CD4-positive, alpha-beta memory T cell (primary cell): ENCODE measurements at regions of chr1 and their contacts with region 1.

Region 1: DNA sequence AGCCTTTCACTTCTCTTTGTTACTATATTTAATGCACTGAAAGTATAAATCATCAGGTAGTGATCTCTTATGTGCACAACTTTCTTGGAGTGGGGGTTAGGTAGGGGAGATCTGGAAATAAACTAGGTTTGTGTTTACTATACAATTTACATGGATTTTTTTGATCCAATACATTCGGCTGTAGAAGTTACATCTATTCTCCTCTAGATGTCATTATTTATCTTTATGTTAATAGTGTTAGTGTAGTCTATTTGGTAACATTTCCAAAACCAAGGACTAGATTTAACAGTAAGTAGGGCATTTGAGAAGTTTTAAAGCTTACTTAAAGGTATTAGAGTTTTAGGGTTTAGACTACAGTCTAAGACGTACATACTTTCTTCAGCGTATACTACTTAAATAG is 5.4 kb downstream of the VPS45 start:
- DNase-seq: peak in 4 of 5 donors; percentile 45 to 59 (median 50)
- H3K4me3 ChIP-seq: no peak overlapping the region
- H3K4me3 Mint-ChIP-seq: no peak overlapping the region
- H3K27ac ChIP-seq: no peak overlapping the region
- H3K27ac Mint-ChIP-seq: peak overlapping the region in 4 of 7 donors; percentile 1 to 76 (median 66)
- H3K4me1 ChIP-seq: peaks cover 29% of the 10 kb centered on the region
- H3K4me1 Mint-ChIP-seq: peaks cover 35 to 47% (median 40%) of the 10 kb centered on the region in 4 donors
- H3K27me3 ChIP-seq: no peaks in the 10 kb centered on the region
- H3K27me3 Mint-ChIP-seq: no peaks in the 10 kb centered on the region

Region 2: DNA sequence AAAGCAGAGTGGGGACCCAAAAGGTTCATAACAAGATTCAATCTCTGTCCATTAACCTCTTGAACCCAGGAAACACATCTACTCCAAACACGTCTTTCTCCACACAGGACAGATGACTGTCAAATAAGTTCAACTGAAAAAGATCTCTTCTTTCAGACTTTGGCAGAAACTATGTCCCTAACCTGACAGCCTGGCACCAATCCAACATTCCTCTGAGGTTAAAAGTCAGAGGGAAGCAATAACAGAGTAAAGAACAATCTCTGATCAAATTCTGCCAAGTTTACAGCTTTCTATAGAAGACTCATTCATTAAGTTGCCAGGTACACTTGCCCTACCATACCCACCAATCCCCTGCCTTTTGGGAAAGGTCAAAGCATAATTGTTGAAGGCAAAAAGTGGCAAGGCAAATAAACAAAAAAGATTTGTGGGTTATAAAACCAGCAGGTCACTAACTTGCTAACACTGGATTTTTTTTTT is 94.4 kb before region 1 on chr1:
- CTCF ChIA-PET with region 1: no interaction called
- POLR2A ChIA-PET with region 1: no interaction called
- intact Hi-C with region 1: no loop called
- DNase-seq: no peak
- H3K4me3 ChIP-seq: no peak overlapping the region
- H3K4me3 Mint-ChIP-seq: no peak overlapping the region
- H3K27ac ChIP-seq: no peak overlapping the region
- H3K27ac Mint-ChIP-seq: peak overlapping the region in 2 of 7 donors; percentile 41 to 60
- H3K4me1 ChIP-seq: no peaks in the 10 kb centered on the region
- H3K4me1 Mint-ChIP-seq: peaks cover 6 to 13% (median 8%) of the 10 kb centered on the region in 4 donors
- H3K27me3 ChIP-seq: no peaks in the 10 kb centered on the region
- H3K27me3 Mint-ChIP-seq: no peaks in the 10 kb centered on the region

Region 3: GRCh38 chr1:150051089-150051373 is 21.9 kb before region 1 on chr1:
- CTCF ChIA-PET with region 1: no interaction called
- POLR2A ChIA-PET with region 1: no interaction called
- intact Hi-C with region 1: no loop called
- DNase-seq: no peak
- H3K4me3 ChIP-seq: no peak overlapping the region
- H3K4me3 Mint-ChIP-seq: no peak overlapping the region
- H3K27ac ChIP-seq: no peak overlapping the region
- H3K27ac Mint-ChIP-seq: no peak overlapping the region
- H3K4me1 ChIP-seq: no peaks in the 10 kb centered on the region
- H3K4me1 Mint-ChIP-seq: peaks cover 0 to 3% (median 1%) of the 10 kb centered on the region in 4 donors
- H3K27me3 ChIP-seq: no peaks in the 10 kb centered on the region
- H3K27me3 Mint-ChIP-seq: peaks cover 0 to 1% of the 10 kb centered on the region in 2 donors

Region 4: DNA sequence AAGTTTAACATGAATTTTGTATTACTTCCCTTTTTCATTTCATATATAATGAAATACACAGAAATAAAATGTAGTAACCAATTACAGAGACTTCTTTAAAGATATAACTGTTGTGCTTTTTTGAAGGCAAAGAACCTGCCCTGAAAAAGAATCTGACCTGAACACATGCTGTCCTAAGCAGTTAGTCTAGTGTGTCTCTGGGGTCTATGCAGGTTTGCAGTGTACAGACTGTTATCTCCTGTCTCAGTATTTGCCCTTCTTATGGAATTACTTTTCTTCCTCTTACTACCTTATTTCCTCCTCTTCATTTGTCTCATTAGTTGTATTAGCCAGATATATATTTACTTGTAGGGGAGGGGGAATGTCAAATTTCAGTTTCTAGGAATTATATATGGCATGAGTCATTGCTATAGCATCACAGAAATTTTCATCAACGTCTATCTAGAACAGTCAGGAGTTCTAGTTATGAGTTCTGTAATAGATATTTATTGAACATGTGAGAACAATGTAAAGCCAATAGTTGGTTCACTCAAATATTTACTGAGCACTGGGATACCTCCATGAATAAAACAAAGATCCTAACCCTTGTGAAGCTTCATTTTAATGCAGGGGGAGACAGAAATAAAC is 48.4 kb after region 1 on chr1:
- CTCF ChIA-PET with region 1: interaction called, 14 read pairs
- POLR2A ChIA-PET with region 1: interaction called, 3 read pairs
- intact Hi-C with region 1: no loop called
- DNase-seq: no peak
- H3K4me3 ChIP-seq: no peak overlapping the region
- H3K4me3 Mint-ChIP-seq: no peak overlapping the region
- H3K27ac ChIP-seq: no peak overlapping the region
- H3K27ac Mint-ChIP-seq: peak overlapping the region in 6 of 7 donors; percentile 1 to 65 (median 47)
- H3K4me1 ChIP-seq: peaks cover 12% of the 10 kb centered on the region
- H3K4me1 Mint-ChIP-seq: peaks cover 21 to 39% (median 29%) of the 10 kb centered on the region in 4 donors
- H3K27me3 ChIP-seq: no peaks in the 10 kb centered on the region
- H3K27me3 Mint-ChIP-seq: no peaks in the 10 kb centered on the region

Region 5: DNA sequence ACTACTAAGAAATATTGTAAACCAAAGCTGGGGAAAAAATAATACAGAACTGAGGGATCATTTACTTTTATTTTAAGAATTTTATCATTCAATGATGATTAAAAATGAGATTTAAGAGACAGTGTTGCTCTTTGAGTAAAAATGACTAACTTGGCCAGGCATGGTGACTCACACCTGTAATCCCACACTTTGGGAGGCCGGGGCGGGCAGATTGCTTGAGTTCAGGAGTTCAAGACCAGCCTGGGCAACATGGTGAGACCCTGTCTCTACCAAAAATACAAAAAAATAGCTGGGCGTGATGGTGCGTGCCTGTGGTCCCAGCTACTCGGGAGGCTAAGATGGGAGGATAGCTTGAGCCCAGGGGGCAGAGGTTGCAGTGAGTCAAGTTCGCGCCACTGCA is 54.9 kb after region 1 on chr1:
- CTCF ChIA-PET with region 1: interaction called, 14 read pairs
- POLR2A ChIA-PET with region 1: interaction called, 3 read pairs
- intact Hi-C with region 1: no loop called
- DNase-seq: no peak
- H3K4me3 ChIP-seq: no peak overlapping the region
- H3K4me3 Mint-ChIP-seq: no peak overlapping the region
- H3K27ac ChIP-seq: no peak overlapping the region
- H3K27ac Mint-ChIP-seq: peak overlapping the region in 2 of 7 donors; percentile 47 to 64
- H3K4me1 ChIP-seq: peaks cover 7% of the 10 kb centered on the region
- H3K4me1 Mint-ChIP-seq: peaks cover 11 to 17% (median 14%) of the 10 kb centered on the region in 4 donors
- H3K27me3 ChIP-seq: no peaks in the 10 kb centered on the region
- H3K27me3 Mint-ChIP-seq: no peaks in the 10 kb centered on the region

Region 6: GRCh38 chr1:150162862-150163706 is 90.1 kb after region 1 on chr1:
- CTCF ChIA-PET with region 1: interaction called, 574 read pairs
- POLR2A ChIA-PET with region 1: interaction called, 130 read pairs
- intact Hi-C with region 1: loop called (anchors 1 kb)
- DNase-seq: no peak
- H3K4me3 ChIP-seq: no peak overlapping the region
- H3K4me3 Mint-ChIP-seq: peak overlapping the region in 5 of 8 donors; percentile 0 to 61 (median 34)
- H3K27ac ChIP-seq: no peak overlapping the region
- H3K27ac Mint-ChIP-seq: peak overlapping the region in 5 of 7 donors; percentile 34 to 83 (median 53)
- H3K4me1 ChIP-seq: peaks cover 40% of the 10 kb centered on the region
- H3K4me1 Mint-ChIP-seq: peaks cover 34 to 52% (median 42%) of the 10 kb centered on the region in 4 donors
- H3K27me3 ChIP-seq: no peaks in the 10 kb centered on the region
- H3K27me3 Mint-ChIP-seq: no peaks in the 10 kb centered on the region